H1 (cell line): ENCODE measurements at regions of chr5 and their contacts with region 1.

Region 1: DNA sequence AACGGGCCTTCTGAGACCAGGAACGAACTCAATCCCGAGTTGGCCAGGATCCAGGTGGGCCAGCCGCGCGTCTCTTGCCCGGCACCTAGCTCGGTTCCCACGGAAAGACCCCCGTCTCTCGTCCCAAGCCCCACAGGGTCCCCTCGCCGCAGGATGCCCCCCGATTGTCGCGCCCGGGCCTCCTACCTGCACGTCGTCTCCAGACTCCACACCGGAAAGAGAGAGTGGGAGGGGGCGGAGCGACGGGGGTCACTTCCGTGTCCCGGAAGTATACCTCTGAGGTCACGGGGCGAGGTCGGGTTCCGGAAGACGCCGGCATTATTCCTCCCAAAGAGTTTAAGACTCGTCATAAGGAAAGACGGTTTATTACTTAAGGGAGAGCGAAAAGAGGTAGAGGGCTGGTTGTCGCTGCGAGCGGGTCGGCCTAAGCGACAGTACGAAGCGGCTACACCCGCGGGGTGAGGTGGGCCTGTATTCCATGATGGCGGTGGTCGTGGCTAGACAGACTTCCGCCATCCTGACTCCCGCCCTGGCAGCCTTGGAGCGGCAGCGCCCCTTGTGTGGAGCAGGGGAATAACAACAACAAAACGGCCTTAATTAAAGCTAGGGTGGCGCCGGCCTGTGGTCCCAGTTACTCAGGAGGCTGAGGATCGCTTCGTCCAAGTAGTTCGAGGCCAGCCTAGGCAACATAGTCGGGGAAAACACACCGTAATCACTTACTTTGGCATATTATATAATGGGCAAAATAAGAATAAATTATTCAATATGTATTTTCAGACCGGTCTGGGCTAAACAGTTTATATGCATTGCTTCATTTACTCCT is at the start of gene RPS14:
- DNase-seq: peak; percentile 77 to 96
- H3K4me3 ChIP-seq: peak within 1 kb of the TSS; percentile 97 to 100 (median 98)
- H3K27ac ChIP-seq: peak within 1 kb of the TSS; percentile 99
- H3K4me1 ChIP-seq: peaks cover 0 to 15% (median 8%) of the 10 kb centered on the region in 4 experiments; a peak in 6 of 7 replicates
- H3K27me3 ChIP-seq: no peaks in the 10 kb centered on the region
- CTCF ChIP-seq: peak; percentile 78 to 93 (median 85)
- EP300 ChIP-seq: peak in 1 of 2 experiments; percentile 21; a peak in 1 of 3 replicates
- POLR2A ChIP-seq: peak; percentile 90 to 98
- RAD21 ChIP-seq: peak; percentile 33 to 46; a peak in 3 of 4 replicates
- total RNA-seq, gene RPS14: 2,548 and 2,599 TPM in 2 replicates

Region 2: DNA sequence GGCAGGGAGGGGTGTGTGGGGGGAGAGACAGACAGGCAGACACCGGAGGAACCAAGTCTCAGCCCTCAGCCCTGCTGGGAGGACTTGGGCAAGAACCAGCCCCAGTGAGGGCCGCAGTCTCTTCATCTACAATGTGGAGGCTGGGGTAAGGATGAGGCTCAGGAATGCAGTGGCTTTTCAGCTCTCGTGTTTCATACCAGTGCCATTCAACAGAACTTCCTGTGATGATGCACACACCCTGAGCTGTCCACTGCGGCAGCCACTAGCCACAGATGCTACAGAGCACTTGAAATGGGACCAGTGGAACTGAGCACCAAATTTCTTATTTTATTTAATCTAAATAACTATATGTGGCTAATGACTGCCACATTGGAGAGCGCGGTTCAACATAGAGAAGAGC is 170.8 kb before region 1 on chr5:
- CTCF ChIA-PET with region 1: no interaction called
- POLR2A ChIA-PET with region 1: no interaction called
- DNase-seq: no peak
- H3K4me3 ChIP-seq: no peak overlapping the region
- H3K27ac ChIP-seq: peak overlapping the region; percentile 31; the same call in 1 of the 2 replicates
- H3K4me1 ChIP-seq: 0 out of 7 replicates have a peak, but pooled peaks cover 0 to 1% (median 0%) of the 10 kb centered on the region in 4 experiments
- H3K27me3 ChIP-seq: 0 out of 7 replicates have a peak, but pooled peaks cover 0 to 2% (median 0%) of the 10 kb centered on the region in 4 experiments
- CTCF ChIP-seq: no peak
- EP300 ChIP-seq: no peak
- POLR2A ChIP-seq: no peak
- RAD21 ChIP-seq: no peak

Region 3: DNA sequence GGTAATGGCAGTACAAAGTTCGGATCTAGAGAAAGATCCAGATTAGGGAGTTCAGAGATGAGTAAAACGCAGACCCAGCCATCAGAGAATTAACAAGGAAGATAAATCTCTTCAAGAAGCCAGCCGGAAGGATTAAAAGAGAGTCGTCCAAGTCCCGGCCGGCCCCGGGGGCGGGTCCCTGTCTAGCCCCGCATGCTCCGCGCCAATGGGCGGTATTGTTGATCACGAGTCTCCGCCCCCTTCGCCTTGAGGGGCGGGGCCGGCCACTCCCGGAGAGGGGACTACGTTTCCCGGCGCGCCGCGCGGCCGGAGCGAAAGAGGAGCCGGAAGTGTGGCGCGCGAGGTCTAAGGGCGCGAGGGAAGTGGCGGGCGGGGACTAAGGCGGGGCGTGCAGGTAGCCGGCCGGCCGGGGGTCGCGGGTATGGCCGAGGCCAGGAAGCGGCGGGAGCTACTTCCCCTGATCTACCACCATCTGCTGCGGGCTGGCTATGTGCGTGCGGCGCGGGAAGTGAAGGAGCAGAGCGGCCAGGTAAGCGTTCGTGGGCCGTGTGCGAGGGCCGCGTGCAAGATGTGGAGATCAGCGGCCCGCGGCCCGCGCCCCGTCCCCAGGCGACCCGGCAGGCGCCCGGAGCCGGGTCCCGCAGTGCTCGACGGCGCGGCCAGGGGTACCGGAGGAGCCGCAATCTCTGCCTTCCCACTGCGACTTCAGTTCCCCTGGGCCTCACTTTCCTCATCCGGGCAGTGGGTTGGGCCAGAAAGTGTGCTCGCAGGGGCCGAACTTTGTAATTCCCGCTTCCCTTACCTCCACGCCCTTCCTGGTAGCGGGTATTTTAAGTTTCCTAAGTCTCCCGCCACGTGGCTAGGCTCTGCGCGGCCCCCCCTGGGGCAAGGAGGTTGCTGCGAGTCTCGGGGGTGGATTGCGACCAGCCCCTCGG is 92.1 kb before region 1 on chr5 and contains the start of gene TCOF1:
- CTCF ChIA-PET with region 1: interaction called, 3 read pairs
- POLR2A ChIA-PET with region 1: interaction called, 14 read pairs
- DNase-seq: peak; percentile 91 to 98
- H3K4me3 ChIP-seq: peak within 1 kb of the TSS; percentile 91 to 99 (median 96)
- H3K27ac ChIP-seq: peak within 1 kb of the TSS; percentile 73
- H3K4me1 ChIP-seq: peaks cover 0 to 7% (median 2%) of the 10 kb centered on the region in 4 experiments; a peak in 4 of 7 replicates
- H3K27me3 ChIP-seq: no peaks in the 10 kb centered on the region
- CTCF ChIP-seq: no peak
- EP300 ChIP-seq: no peak
- POLR2A ChIP-seq: peak; percentile 74 to 82
- RAD21 ChIP-seq: no peak
- total RNA-seq, gene TCOF1: 158 and 170 TPM in 2 replicates

Region 4: GRCh38 chr5:150436141-150436680 is 13.5 kb before region 1 on chr5:
- CTCF ChIA-PET with region 1: interaction called, 12 read pairs
- POLR2A ChIA-PET with region 1: interaction called, 70 read pairs
- DNase-seq: peak; percentile 75 to 97
- H3K4me3 ChIP-seq: no peak overlapping the region
- H3K27ac ChIP-seq: no peak overlapping the region
- H3K4me1 ChIP-seq: peaks cover 0 to 4% (median 1%) of the 10 kb centered on the region in 4 experiments; a peak in 2 of 7 replicates
- H3K27me3 ChIP-seq: no peaks in the 10 kb centered on the region
- CTCF ChIP-seq: peak; percentile 85 to 93 (median 88)
- EP300 ChIP-seq: no peak
- POLR2A ChIP-seq: no peak
- RAD21 ChIP-seq: peak; percentile 88 to 90

Region 5: DNA sequence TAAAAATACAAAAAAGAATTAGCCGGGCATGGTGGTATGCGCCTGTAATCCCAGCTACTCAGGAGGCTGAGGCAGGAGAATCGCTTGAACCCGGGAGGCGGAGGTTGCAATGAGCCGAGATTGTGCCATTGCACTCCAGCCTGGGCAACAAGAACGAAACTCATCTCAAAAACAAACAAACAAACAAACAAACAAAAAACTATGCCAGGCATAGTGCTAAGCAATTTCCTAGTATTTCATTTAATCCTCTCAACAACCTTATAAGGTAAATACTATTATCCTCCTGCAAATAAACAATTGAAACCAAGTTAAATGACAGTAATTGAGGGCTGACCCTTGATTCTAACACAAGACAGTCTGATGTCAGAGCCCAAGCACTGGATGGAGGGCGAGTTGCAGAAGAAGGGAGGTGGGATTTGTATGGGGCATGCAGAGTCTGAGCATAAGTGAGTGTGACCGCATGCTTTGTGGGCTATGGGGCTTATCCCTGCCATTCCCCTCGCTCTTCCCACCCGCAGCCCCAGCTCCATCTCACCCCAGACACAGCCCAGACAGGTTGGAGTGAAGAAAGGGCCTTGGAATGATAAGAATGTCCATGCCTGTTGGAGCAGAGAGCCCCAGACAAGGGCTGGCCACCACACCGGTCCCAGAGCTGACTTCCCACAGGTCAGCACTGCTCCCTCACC is 24.1 kb after region 1 on chr5:
- CTCF ChIA-PET with region 1: interaction called, 4 read pairs
- POLR2A ChIA-PET with region 1: interaction called, 24 read pairs
- DNase-seq: peak in 1 of 2 experiments; percentile 82
- H3K4me3 ChIP-seq: no peak overlapping the region
- H3K27ac ChIP-seq: no peak overlapping the region
- H3K4me1 ChIP-seq: peaks cover 0 to 18% (median 5%) of the 10 kb centered on the region in 4 experiments; a peak in 6 of 7 replicates
- H3K27me3 ChIP-seq: no peaks in the 10 kb centered on the region
- CTCF ChIP-seq: no peak
- EP300 ChIP-seq: no peak
- POLR2A ChIP-seq: no peak
- RAD21 ChIP-seq: no peak

Region 6: GRCh38 chr5:150497274-150497988 is 47.7 kb after region 1 on chr5:
- CTCF ChIA-PET with region 1: interaction called, 4 read pairs
- POLR2A ChIA-PET with region 1: interaction called, 16 read pairs
- DNase-seq: no peak
- H3K4me3 ChIP-seq: no peak overlapping the region
- H3K27ac ChIP-seq: peak overlapping the region; percentile 25; the same call in 1 of the 2 replicates
- H3K4me1 ChIP-seq: peaks cover 21 to 28% (median 27%) of the 10 kb centered on the region in 4 experiments
- H3K27me3 ChIP-seq: no peaks in the 10 kb centered on the region
- CTCF ChIP-seq: no peak
- EP300 ChIP-seq: no peak
- POLR2A ChIP-seq: no peak
- RAD21 ChIP-seq: no peak

Region 7: DNA sequence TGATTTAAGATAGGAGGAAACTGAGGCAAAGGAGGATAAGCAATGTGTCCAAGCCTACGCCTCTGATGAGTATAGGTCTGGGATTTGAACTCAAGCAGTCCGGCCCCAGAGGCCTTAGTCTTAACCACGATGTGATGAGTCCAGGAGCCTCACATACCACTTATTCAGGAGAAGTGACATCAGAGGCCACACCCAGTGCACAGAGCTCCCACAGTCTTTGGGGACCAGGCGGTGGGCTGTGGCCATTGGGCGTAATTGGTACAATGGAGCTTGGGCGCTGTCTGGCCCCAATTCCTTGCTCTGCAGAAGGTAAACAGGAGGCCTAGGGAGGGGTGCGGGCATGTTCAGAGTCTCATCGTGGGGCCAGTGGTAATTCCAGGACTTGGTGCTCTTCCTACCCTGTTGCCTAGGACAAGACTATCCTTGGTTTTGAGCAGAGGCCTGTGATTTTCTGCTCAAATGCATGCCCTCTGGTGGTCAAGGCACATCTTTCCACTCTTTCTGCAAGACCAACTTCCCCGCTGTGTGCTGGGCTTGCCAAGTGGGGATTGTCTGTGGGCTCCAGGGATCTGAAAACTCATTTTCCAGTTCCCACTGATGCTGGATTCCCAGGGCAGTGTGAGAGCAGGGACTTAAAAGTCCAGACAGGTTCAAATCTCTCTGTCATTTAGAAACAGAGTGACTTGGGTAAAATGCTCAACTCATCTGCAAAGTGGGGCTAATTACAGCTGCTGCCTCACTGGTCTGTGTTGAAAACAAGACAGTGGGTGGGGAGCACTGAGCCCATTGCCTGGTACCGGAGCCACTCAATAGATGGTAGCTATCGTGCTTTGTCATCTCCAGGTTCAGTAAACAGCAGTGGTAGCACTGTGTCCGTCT is 74.0 kb after region 1 on chr5:
- CTCF ChIA-PET with region 1: interaction called, 12 read pairs
- POLR2A ChIA-PET with region 1: interaction called, 20 read pairs
- DNase-seq: no peak
- H3K4me3 ChIP-seq: no peak overlapping the region
- H3K27ac ChIP-seq: no peak overlapping the region
- H3K4me1 ChIP-seq: peaks cover 7 to 25% (median 14%) of the 10 kb centered on the region in 4 experiments
- H3K27me3 ChIP-seq: no peaks in the 10 kb centered on the region
- CTCF ChIP-seq: peak; percentile 61 to 86 (median 71)
- EP300 ChIP-seq: no peak
- POLR2A ChIP-seq: no peak
- RAD21 ChIP-seq: peak; percentile 65 to 78